ENCODE measurements at regions of chr19 and their contacts with region 1.

Region 1: DNA sequence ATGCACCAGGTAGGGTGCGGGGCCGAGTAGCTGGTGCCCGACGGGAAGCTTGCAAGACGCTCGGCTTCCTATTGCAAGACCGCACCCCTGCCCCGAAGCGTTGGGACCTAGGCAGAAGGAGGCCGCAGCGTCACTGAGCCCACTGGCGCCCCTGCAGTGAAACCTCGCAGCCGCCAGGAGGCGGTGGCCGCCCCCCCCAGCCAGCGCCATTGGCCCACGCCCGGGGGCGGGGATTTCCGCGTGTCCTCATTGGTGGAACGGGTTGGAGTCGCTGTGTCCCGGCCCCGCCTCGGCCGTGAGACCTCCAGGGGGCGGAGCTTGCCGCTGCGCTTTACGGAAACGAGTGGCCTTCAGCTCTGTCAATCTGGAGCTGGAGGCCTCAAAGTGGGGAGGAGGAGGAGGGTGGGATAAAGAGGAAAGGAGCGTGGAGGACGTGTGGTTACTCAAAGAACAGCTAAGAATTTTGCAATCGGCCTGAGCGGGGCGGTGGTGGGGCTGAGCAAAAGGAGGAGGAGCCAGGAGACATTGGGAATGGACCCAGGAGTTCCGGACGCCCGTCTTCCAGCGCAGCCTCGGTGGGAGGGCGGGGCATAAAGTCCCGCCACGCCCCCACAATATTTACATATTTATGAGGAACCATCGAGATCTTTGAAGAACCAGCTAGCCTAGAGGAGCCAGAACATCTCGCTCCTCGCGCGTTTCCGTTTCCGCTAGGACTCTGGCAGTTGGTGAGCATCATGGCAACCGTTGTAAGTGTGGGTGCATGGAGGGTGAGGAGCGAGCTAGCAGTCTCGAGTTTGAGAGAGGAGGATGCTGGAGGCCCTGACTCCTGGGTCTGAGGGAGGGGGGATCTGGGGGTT is at the starts of genes GYS1 and RUVBL2:
- DNase-seq: peak; percentile 98 to 100 (median 99)
- ATAC-seq: peak; percentile 92
- H3K4me3 Mint-ChIP-seq: peak within 1 kb of the TSS; percentile 92 to 98 (median 94)
- H3K27ac Mint-ChIP-seq: peak within 1 kb of the TSS; percentile 90 to 99 (median 98)
- H3K4me1 Mint-ChIP-seq: peaks cover 33 to 63% (median 44%) of the 10 kb centered on the region in 4 donors
- H3K27me3 Mint-ChIP-seq: no peaks in the 10 kb centered on the region
- polyA plus RNA-seq, gene GYS1: 17.9 to 31.0 (median 22.3) TPM
- polyA plus RNA-seq, gene RUVBL2: 47.5 to 66.1 (median 62.0) TPM

Region 2: DNA sequence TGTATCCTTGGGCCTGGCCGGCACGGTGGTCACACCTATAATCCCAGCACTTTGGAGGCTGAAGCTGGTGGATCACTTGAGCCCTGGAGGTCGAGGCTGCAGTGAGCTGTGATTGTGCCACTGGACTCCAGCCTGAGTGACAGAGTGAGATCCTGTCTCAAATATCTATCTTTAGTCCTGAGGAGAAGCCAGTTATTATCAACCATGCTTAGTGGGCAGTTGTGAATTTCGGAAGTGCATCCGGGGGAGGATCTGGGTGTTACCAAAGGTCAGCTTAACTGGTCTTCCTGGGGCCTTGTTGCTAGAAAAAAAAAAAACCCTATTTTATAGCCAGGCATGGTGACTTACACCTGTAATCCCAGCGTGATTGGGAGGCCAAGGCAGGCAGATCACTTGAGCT is 50.3 kb before region 1 on chr19:
- POLR2A ChIA-PET with region 1: no interaction called
- DNase-seq: no peak
- ATAC-seq: no peak
- H3K4me3 Mint-ChIP-seq: no peak overlapping the region
- H3K27ac Mint-ChIP-seq: no peak overlapping the region
- H3K4me1 Mint-ChIP-seq: peaks cover 0 to 2% (median 0%) of the 10 kb centered on the region in 4 donors
- H3K27me3 Mint-ChIP-seq: no peaks in the 10 kb centered on the region

Region 3: GRCh38 chr19:48954595-48955310 is 38.7 kb before region 1 on chr19 and contains the start of gene BAX:
- POLR2A ChIA-PET with region 1: interaction called, 11 read pairs
- DNase-seq: peak; percentile 65 to 91 (median 76)
- ATAC-seq: peak; percentile 90 to 92
- H3K4me3 Mint-ChIP-seq: peak within 1 kb of the TSS; percentile 84 to 95 (median 90)
- H3K27ac Mint-ChIP-seq: peak within 1 kb of the TSS; percentile 84 to 97 (median 92)
- H3K4me1 Mint-ChIP-seq: peaks cover 12 to 38% (median 28%) of the 10 kb centered on the region in 4 donors
- H3K27me3 Mint-ChIP-seq: no peaks in the 10 kb centered on the region
- polyA plus RNA-seq, gene BAX: 58.5 to 97.1 (median 83.1) TPM

Region 4: GRCh38 chr19:49017666-49018351 is 24.4 kb after region 1 on chr19:
- POLR2A ChIA-PET with region 1: interaction called, 19 read pairs
- DNase-seq: peak; percentile 55 to 83 (median 65)
- ATAC-seq: peak; percentile 88 to 93
- H3K4me3 Mint-ChIP-seq: peak overlapping the region; percentile 81 to 95 (median 90)
- H3K27ac Mint-ChIP-seq: peak overlapping the region in 6 of 10 donors; percentile 38 to 73 (median 67)
- H3K4me1 Mint-ChIP-seq: peaks cover 10 to 35% (median 24%) of the 10 kb centered on the region in 4 donors
- H3K27me3 Mint-ChIP-seq: peaks cover 0 to 6% (median 0%) of the 10 kb centered on the region in 5 donors

Region 5: DNA sequence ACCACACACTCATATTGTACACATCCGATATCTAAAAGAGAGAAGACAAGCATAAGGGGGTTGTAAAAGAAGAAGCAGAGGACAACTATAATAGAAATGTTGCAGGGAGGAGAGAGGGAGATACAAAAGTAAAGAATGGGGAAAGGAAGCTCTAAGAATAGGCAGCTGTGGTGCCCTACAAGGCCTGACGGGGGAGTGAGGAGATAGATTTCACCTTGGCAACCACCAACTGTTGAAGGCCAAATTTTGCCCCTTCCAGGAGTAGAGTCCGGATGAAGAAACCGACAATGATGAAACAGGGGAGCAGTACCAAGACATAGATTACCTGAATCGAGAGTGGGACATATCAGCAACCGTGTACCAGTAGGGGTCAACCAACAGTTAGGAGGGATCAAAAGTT is 315.7 kb after region 1 on chr19:
- POLR2A ChIA-PET with region 1: no interaction called
- DNase-seq: no peak
- ATAC-seq: no peak
- H3K4me3 Mint-ChIP-seq: no peak overlapping the region
- H3K27ac Mint-ChIP-seq: peak overlapping the region in 2 of 10 donors; percentile 17 to 43
- H3K4me1 Mint-ChIP-seq: peaks cover 0 to 5% (median under 1%) of the 10 kb centered on the region in 4 donors
- H3K27me3 Mint-ChIP-seq: no peaks in the 10 kb centered on the region